ENCODE measurements at regions of chr19 and their contacts with region 1.

Region 1: DNA sequence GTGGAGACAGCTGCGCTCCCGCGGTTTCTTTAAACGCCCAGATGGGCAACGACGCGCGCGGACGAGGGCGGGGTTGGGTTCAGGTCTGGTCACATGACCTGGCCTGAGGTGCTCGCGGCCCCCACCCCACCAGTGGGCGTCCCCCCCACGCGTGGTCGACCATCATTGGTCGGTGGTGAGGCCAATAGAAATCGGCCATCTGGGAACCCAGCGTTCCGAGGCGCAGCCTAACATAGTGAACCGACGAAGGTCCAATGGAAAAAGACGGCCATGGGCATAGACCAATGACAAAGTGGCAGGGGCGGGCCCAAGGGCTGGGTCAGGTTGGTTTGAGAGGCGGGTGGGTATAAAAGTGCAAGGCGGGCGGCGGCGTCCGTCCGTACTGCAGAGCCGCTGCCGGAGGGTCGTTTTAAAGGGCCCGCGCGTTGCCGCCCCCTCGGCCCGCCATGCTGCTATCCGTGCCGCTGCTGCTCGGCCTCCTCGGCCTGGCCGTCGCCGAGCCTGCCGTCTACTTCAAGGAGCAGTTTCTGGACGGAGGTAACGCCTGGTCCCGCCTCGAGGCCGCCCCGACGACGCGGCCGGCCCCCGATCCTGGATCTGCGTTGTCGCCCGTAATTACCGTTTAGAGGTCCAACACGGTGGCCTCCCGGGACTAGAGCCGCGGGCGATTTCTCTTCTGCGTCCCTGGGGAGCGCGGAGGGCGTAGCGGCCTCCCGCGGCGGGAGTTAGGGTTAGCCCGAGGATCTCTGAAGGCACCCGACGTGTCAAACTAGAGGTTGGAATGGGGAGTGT is at the start of gene CALR:
- DNase-seq: peak; percentile 91
- ATAC-seq: peak; percentile 95
- H3K4me3 ChIP-seq: peak within 1 kb of the TSS; percentile 96 to 97
- H3K27ac ChIP-seq: peak within 1 kb of the TSS; percentile 93
- H3K4me1 ChIP-seq: peaks cover 23% of the 10 kb centered on the region
- H3K27me3 ChIP-seq: no peaks in the 10 kb centered on the region
- CTCF ChIP-seq: no peak
- total RNA-seq, gene CALR: 1,060 TPM

Region 2: DNA sequence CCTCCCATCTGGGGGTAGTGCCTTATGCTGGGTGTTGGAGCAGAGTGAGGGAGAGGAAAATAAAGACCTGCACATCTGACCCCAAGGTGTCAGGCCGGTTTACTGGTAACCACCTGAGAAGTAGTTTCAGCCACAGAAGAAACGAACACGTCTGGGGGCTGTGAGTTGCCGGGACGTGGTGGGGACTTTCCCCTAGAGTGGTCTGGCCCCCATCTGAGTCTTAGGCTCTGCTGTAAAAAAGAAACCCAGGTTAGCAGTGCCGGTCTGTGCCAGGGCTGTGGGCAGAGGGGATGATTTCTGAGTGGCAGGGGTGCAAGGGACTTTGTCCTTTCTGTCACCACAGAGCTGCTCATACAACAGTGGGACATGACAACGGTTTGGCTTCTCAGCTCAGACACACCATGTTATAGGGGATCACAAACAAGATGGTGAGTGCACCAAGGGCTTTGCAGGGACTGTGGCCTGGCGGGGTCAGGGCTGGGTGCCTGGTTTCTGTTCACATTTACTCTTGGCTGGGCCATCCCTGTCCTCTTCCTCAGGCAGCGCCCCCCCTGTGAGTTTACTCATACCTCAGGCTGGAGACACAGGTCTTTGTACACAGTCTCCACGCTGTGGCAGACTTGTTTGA is 38.4 kb before region 1 on chr19:
- CTCF ChIA-PET with region 1: no interaction called
- POLR2A ChIA-PET with region 1: interaction called, 12 read pairs
- in situ Hi-C with region 1: no loop called
- intact Hi-C with region 1: no loop called
- DNase-seq: no peak
- ATAC-seq: no peak
- H3K4me3 ChIP-seq: no peak overlapping the region
- H3K27ac ChIP-seq: no peak overlapping the region
- H3K4me1 ChIP-seq: no peaks in the 10 kb centered on the region
- H3K27me3 ChIP-seq: no peaks in the 10 kb centered on the region
- CTCF ChIP-seq: no peak

Region 3: GRCh38 chr19:12918271-12918670 is 20.2 kb before region 1 on chr19:
- CTCF ChIA-PET with region 1: no interaction called
- POLR2A ChIA-PET with region 1: no interaction called
- in situ Hi-C with region 1: no loop called
- intact Hi-C with region 1: no loop called
- DNase-seq: no peak
- ATAC-seq: no peak
- H3K4me3 ChIP-seq: no peak overlapping the region
- H3K27ac ChIP-seq: no peak overlapping the region
- H3K4me1 ChIP-seq: no peaks in the 10 kb centered on the region
- H3K27me3 ChIP-seq: no peaks in the 10 kb centered on the region
- CTCF ChIP-seq: no peak

Measured in Panc1 (cell line).